Activated CD4-positive, alpha-beta memory T cell treated with anti-CD3 and anti-CD28 coated beads for 36 hours (primary cell): ENCODE measurements at regions of chr2 and their contacts with region 1.

Region 1: GRCh38 chr2:37414470-37414949 is 70.1 kb downstream of the QPCT start:
- DNase-seq: no peak
- H3K4me3 Mint-ChIP-seq: no peak overlapping the region
- H3K27ac Mint-ChIP-seq: no peak overlapping the region
- H3K4me1 Mint-ChIP-seq: peaks cover 6% of the 10 kb centered on the region
- H3K27me3 Mint-ChIP-seq: no peaks in the 10 kb centered on the region

Region 2: DNA sequence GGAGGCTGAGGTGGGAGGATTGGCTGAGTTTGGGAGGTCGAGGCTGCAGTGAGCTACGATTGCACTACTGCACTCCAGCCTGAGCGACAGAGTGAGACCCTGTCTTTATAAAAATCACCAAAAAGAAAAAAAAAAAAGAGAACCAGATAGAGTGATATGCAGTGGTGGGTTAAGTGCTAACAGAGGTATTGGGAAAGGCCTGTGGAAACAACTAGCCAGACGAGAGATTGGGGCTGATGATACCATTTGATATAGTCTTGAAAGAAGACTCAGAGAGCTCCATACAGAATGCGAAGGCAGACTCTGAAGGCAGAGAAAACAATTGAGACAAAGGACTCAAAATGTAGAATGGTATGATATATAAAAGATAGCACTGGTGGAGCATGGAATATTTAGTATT is 122.8 kb after region 1 on chr2:
- CTCF ChIA-PET with region 1: interaction called, 4 read pairs
- POLR2A ChIA-PET with region 1: no interaction called
- intact Hi-C with region 1: loop called (anchors 1 kb)
- DNase-seq: no peak
- H3K4me3 Mint-ChIP-seq: no peak overlapping the region
- H3K27ac Mint-ChIP-seq: no peak overlapping the region
- H3K4me1 Mint-ChIP-seq: no peaks in the 10 kb centered on the region
- H3K27me3 Mint-ChIP-seq: peaks cover 1% of the 10 kb centered on the region

Region 3: GRCh38 chr2:37809525-37809924 is 395.0 kb after region 1 on chr2:
- CTCF ChIA-PET with region 1: interaction called, 15 read pairs
- POLR2A ChIA-PET with region 1: no interaction called
- intact Hi-C with region 1: loop called (anchors 1 kb)
- DNase-seq: peak; percentile 25
- H3K4me3 Mint-ChIP-seq: no peak overlapping the region
- H3K27ac Mint-ChIP-seq: no peak overlapping the region
- H3K4me1 Mint-ChIP-seq: peaks cover 9% of the 10 kb centered on the region
- H3K27me3 Mint-ChIP-seq: no peaks in the 10 kb centered on the region

Region 4: DNA sequence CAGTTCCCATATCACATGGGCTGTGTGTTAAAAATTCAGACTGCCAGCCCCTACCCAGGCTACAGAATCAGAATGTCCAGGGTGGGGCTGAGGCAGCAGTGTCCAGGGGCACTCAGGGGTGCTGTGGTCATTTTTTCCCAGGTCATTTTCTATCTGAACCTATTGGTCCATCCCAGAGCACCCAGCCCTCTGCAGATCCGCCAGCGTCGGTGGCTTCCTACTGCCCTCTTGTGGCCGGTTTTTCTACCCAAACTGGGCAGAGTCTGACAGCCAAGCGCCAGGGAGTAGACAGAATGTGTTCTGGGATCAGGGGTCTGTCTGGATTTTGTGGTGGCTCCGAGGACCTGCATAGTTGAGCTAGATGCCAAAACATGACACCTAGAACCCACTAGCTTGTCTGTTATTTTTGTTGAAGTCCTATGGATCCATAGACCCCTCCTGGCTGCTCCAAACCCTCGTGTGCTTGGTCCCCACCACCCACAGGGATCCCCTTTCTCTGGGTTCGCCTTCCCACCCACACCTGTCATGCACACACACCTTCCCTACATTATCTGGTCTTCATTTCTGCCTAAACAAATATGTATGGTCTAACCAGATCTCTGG is 476.5 kb after region 1 on chr2:
- CTCF ChIA-PET with region 1: interaction called, 11 read pairs
- POLR2A ChIA-PET with region 1: no interaction called
- intact Hi-C with region 1: no loop called
- DNase-seq: peak; percentile 76
- H3K4me3 Mint-ChIP-seq: no peak overlapping the region
- H3K27ac Mint-ChIP-seq: no peak overlapping the region
- H3K4me1 Mint-ChIP-seq: peaks cover 49% of the 10 kb centered on the region
- H3K27me3 Mint-ChIP-seq: peaks cover 6% of the 10 kb centered on the region